ENCODE measurements at regions of chr11 and their contacts with region 1.

Region 1: GRCh38 chr11:3867209-3868091 is 12.0 kb downstream of the STIM1 start:
- DNase-seq: peak; percentile 61
- ATAC-seq: peak; percentile 70
- H3K4me3 Mint-ChIP-seq: peak overlapping the region; percentile 25
- H3K27ac Mint-ChIP-seq: peak overlapping the region; percentile 92
- H3K4me1 Mint-ChIP-seq: peaks cover 90% of the 10 kb centered on the region
- H3K27me3 Mint-ChIP-seq: no peaks in the 10 kb centered on the region

Region 2: GRCh38 chr11:3880724-3881123 is 13.3 kb after region 1 on chr11:
- CTCF ChIA-PET with region 1: interaction called, 11 read pairs
- POLR2A ChIA-PET with region 1: interaction called, 3 read pairs
- intact Hi-C with region 1: no loop called
- DNase-seq: no peak
- ATAC-seq: no peak
- H3K4me3 Mint-ChIP-seq: no peak overlapping the region
- H3K27ac Mint-ChIP-seq: peak overlapping the region; percentile 79
- H3K4me1 Mint-ChIP-seq: peaks cover 76% of the 10 kb centered on the region
- H3K27me3 Mint-ChIP-seq: no peaks in the 10 kb centered on the region

Region 3: GRCh38 chr11:3905080-3905953 is 37.9 kb after region 1 on chr11:
- CTCF ChIA-PET with region 1: interaction called, 4 read pairs
- POLR2A ChIA-PET with region 1: interaction called, 3 read pairs
- intact Hi-C with region 1: loop called in 1 of 2 experiments (anchors 2 kb)
- DNase-seq: peak; percentile 83
- ATAC-seq: peak; percentile 98
- H3K4me3 Mint-ChIP-seq: peak overlapping the region; percentile 5
- H3K27ac Mint-ChIP-seq: peak overlapping the region; percentile 55
- H3K4me1 Mint-ChIP-seq: peaks cover 77% of the 10 kb centered on the region
- H3K27me3 Mint-ChIP-seq: no peaks in the 10 kb centered on the region

Region 4: GRCh38 chr11:4115128-4115527 is 247.7 kb after region 1 on chr11:
- CTCF ChIA-PET with region 1: no interaction called
- POLR2A ChIA-PET with region 1: no interaction called
- intact Hi-C with region 1: no loop called
- DNase-seq: no peak
- ATAC-seq: no peak
- H3K4me3 Mint-ChIP-seq: no peak overlapping the region
- H3K27ac Mint-ChIP-seq: no peak overlapping the region
- H3K4me1 Mint-ChIP-seq: peaks cover 11% of the 10 kb centered on the region
- H3K27me3 Mint-ChIP-seq: no peaks in the 10 kb centered on the region

Measured in activated CD4-positive, alpha-beta T cell treated with anti-CD3 and anti-CD28 coated beads for 36 hours (primary cell).